ENCODE measurements at regions of chrX and their contacts with region 1.

Region 1: GRCh38 chrX:47233337-47234113 is 716 bp downstream of the USP11 start:
- DNase-seq: peak; percentile 92 to 93
- ATAC-seq: peak; percentile 92 to 98 (median 96)
- H3K4me3 ChIP-seq: peak overlapping the region; percentile 41 to 73 (median 68)
- H3K27ac ChIP-seq: peak overlapping the region; percentile 88 to 98 (median 96)
- H3K4me1 ChIP-seq: peaks cover 0 to 23% (median 5%) of the 10 kb centered on the region in 9 donors
- H3K27me3 ChIP-seq: peaks cover 0 to 72% (median 0%) of the 10 kb centered on the region in 7 donors
- CTCF ChIP-seq: no peak

Region 2: DNA sequence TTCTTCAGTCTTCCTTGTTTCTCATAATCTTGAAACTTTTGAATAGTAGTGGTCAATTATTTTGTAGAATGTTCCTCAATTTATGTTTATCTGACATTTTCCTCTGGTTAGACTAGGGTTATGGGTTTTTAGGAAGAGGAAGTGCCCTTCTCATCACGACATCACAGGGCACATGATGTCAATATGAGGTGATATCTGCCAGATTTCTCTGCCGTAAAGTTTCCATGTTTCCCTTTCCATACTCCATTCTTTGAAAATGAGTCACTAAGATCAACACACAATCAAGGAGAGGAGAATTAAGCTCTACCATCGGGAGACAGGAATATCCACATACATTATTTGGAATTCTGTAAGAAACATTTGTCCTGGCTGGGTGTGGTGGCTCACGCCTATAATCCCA is 368.2 kb before region 1 on chrX:
- intact Hi-C with region 1: no loop called
- DNase-seq: no peak
- ATAC-seq: no peak
- H3K4me3 ChIP-seq: no peak overlapping the region
- H3K27ac ChIP-seq: peak overlapping the region in 1 of 10 donors; percentile 20
- H3K4me1 ChIP-seq: peaks cover 0 to 5% (median 0%) of the 10 kb centered on the region in 9 donors
- H3K27me3 ChIP-seq: no peaks in the 10 kb centered on the region
- CTCF ChIP-seq: no peak

Region 3: DNA sequence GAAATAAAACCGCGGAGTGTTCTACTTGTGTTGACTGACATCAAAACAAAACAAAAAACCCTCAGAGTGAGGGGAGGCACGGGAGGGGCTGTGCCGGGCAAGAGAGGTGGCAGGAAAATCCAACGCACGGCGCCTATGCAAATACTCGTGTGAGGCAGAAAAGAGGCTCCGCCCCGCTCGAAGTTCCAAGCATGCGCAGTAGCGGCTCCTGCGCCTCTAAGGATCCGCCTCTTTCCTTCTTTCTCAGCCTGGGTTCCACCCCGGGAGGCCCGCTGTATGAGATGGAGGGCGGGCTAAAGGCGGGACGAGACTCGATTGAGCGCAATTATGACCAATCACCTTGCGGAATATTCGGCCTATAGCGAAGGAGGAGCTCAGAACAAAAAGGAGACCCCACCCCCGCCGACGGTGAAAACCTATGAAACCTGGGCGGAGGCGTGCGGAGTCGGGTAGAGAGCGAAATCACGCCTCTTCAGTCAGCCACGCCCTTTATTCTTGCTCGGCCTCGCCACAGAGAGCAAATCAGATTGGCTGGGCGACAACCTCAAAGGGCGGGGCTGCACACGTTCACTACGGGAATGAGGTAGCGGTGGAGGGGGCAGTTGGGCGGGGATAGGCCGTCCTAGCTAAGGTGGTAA is 15.8 kb before region 1 on chrX:
- intact Hi-C with region 1: loop called in 4 of 10 experiments (anchors 1 to 2 kb)
- DNase-seq: peak; percentile 92 to 97
- ATAC-seq: peak; percentile 86 to 94 (median 92)
- H3K4me3 ChIP-seq: peak overlapping the region; percentile 69 to 94 (median 77)
- H3K27ac ChIP-seq: peak overlapping the region; percentile 94 to 99 (median 98)
- H3K4me1 ChIP-seq: peaks cover 0 to 36% (median 24%) of the 10 kb centered on the region in 9 donors
- H3K27me3 ChIP-seq: no peaks in the 10 kb centered on the region
- CTCF ChIP-seq: no peak

Region 4: GRCh38 chrX:47384502-47384901 is 151.0 kb after region 1 on chrX:
- intact Hi-C with region 1: loop called in 1 of 10 experiments (anchors 10 kb)
- DNase-seq: peak; percentile 10 to 46
- ATAC-seq: peak in 6 of 8 donors; percentile 29 to 67 (median 52)
- H3K4me3 ChIP-seq: no peak overlapping the region
- H3K27ac ChIP-seq: no peak overlapping the region
- H3K4me1 ChIP-seq: peaks cover 0 to 9% (median 0%) of the 10 kb centered on the region in 9 donors
- H3K27me3 ChIP-seq: peaks cover 0 to 22% (median 0%) of the 10 kb centered on the region in 7 donors
- CTCF ChIP-seq: peak; percentile 43 to 79 (median 72)

Region 5: DNA sequence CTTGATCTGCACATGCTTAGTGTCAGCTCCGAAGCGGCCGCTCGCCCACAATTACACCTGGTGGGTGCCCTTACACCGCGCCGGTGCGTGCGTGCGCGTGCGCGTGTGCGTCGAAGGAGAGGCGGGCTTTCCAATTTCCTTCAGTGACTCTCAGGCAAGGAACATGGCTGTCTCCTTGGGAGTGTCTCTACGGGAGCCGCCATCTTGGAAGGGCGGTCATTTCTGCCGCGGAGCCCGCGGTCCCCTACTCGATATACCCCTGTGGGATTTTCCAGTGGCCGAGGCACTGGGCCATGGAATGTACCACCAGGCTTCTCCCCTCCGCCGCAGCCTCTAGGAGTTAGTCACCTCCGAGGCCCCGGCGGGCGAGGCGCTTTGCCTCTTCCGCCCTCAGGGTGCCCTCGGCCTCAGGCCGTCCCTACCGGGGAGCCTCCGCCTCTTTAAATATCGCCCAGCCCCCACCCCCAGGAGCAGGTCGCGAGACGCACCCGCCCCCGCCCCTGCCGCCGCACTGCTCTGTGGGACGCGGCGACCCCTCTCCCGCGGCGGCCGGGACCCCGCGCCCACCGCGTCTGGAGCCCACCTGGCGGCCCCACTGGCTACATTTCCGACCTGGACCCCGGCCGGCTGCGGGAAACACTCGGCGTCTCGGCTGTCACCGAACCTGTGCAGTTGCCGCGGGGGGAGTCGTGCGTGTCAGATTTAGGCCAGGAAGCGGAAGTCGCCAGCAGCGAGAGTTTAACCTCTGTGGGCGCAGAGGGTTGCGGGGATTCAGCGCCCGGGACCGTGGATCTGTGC is 249.2 kb after region 1 on chrX and contains the start of gene ZNF41:
- intact Hi-C with region 1: loop called in 1 of 10 experiments (anchors 10 kb)
- DNase-seq: peak; percentile 65 to 71
- ATAC-seq: peak; percentile 92 to 97 (median 94)
- H3K4me3 ChIP-seq: peak within 1 kb of the TSS; percentile 57 to 91 (median 82)
- H3K27ac ChIP-seq: peak within 1 kb of the TSS; percentile 95 to 99 (median 98)
- H3K4me1 ChIP-seq: peaks cover 0 to 39% (median 12%) of the 10 kb centered on the region in 9 donors
- H3K27me3 ChIP-seq: no peaks in the 10 kb centered on the region
- CTCF ChIP-seq: no peak
- total RNA-seq, gene ZNF41: 10.6 to 19.3 (median 14.8) TPM

Region 6: GRCh38 chrX:48574270-48575266 is 1341.0 kb after region 1 on chrX and contains the start of gene RBM3:
- intact Hi-C with region 1: loop called in 1 of 10 experiments (anchors 10 kb)
- DNase-seq: peak; percentile 91 to 94
- ATAC-seq: peak; percentile 95 to 99 (median 98)
- H3K4me3 ChIP-seq: peak within 1 kb of the TSS; percentile 56 to 87 (median 78)
- H3K27ac ChIP-seq: peak within 1 kb of the TSS; percentile 91 to 100 (median 99)
- H3K4me1 ChIP-seq: peaks cover 8 to 24% (median 14%) of the 10 kb centered on the region in 9 donors
- H3K27me3 ChIP-seq: no peaks in the 10 kb centered on the region
- CTCF ChIP-seq: peak; percentile 11 to 63 (median 46)
- total RNA-seq, gene RBM3: 60.0 to 204 (median 111) TPM